ENCODE measurements at regions of chr1 and their contacts with region 1.

Region 1: GRCh38 chr1:20574686-20575540 is 14.0 kb upstream of the CDA start:
- DNase-seq: no peak
- H3K4me3 ChIP-seq: no peak overlapping the region
- H3K27me3 ChIP-seq: peaks cover 7% of the 10 kb centered on the region
- CTCF ChIP-seq: peak; percentile 91

Region 2: GRCh38 chr1:20507564-20508410 is 67.1 kb before region 1 on chr1 and contains the start of gene MUL1:
- CTCF ChIA-PET with region 1: no interaction called
- POLR2A ChIA-PET with region 1: no interaction called
- DNase-seq: peak; percentile 56
- H3K4me3 ChIP-seq: peak within 1 kb of the TSS; percentile 98
- H3K27me3 ChIP-seq: no peaks in the 10 kb centered on the region; the same call in 1 of the 2 replicates
- CTCF ChIP-seq: 0 out of 2 replicates have a peak, but pooled peaks have one; percentile 7
- polyA plus RNA-seq, gene MUL1: 30.3 and 46.1 TPM in 2 replicates

Region 3: GRCh38 chr1:20589331-20590278 is 14.7 kb after region 1 on chr1:
- CTCF ChIA-PET with region 1: interaction called, 13 read pairs
- POLR2A ChIA-PET with region 1: no interaction called
- DNase-seq: no peak
- H3K4me3 ChIP-seq: peak overlapping the region; percentile 14; the same call in 1 of the 2 replicates
- H3K27me3 ChIP-seq: no peaks in the 10 kb centered on the region
- CTCF ChIP-seq: no peak

Region 4: GRCh38 chr1:20640183-20640597 is 65.3 kb after region 1 on chr1:
- CTCF ChIA-PET with region 1: interaction called, 125 read pairs
- POLR2A ChIA-PET with region 1: no interaction called
- DNase-seq: no peak
- H3K4me3 ChIP-seq: no peak overlapping the region
- H3K27me3 ChIP-seq: no peaks in the 10 kb centered on the region
- CTCF ChIP-seq: peak; percentile 77

Region 5: DNA sequence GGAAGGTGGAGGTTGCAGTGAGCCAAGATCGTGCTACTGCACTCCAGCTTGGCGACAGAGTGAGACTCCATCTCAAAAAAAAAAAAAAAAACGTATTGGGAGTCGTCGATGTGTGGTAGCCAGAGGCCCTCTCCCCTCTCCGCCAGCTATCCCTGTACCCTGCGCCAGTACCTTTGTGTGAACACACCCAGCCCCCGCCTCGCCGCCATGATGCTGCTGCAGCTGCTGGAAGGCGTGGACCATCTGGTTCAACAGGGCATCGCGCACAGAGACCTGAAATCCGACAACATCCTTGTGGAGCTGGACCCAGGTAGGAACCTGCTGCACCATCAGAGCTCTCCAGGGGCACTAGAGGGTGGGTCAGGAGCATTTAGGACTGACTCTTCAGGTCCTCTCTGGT is 70.5 kb after region 1 on chr1:
- CTCF ChIA-PET with region 1: interaction called, 64 read pairs
- POLR2A ChIA-PET with region 1: no interaction called
- DNase-seq: no peak
- H3K4me3 ChIP-seq: no peak overlapping the region
- H3K27me3 ChIP-seq: no peaks in the 10 kb centered on the region
- CTCF ChIP-seq: no peak

Measured in BJ (cell line).